Naive thymus-derived CD8-positive, alpha-beta T cell (primary cell): ENCODE measurements at regions of chr9 and their contacts with region 1.

Region 1: GRCh38 chr9:136267261-136268111 is 21.9 kb upstream of the QSOX2 start:
- DNase-seq: peak; percentile 75 to 90 (median 82)
- ATAC-seq: peak; percentile 93 to 97
- H3K4me3 Mint-ChIP-seq: peak overlapping the region; percentile 75 to 87 (median 80)
- H3K27ac Mint-ChIP-seq: peak overlapping the region; percentile 19 to 93 (median 77)
- H3K4me1 Mint-ChIP-seq: peaks cover 0 to 9% (median 3%) of the 10 kb centered on the region in 4 donors
- H3K27me3 Mint-ChIP-seq: no peaks in the 10 kb centered on the region

Region 2: DNA sequence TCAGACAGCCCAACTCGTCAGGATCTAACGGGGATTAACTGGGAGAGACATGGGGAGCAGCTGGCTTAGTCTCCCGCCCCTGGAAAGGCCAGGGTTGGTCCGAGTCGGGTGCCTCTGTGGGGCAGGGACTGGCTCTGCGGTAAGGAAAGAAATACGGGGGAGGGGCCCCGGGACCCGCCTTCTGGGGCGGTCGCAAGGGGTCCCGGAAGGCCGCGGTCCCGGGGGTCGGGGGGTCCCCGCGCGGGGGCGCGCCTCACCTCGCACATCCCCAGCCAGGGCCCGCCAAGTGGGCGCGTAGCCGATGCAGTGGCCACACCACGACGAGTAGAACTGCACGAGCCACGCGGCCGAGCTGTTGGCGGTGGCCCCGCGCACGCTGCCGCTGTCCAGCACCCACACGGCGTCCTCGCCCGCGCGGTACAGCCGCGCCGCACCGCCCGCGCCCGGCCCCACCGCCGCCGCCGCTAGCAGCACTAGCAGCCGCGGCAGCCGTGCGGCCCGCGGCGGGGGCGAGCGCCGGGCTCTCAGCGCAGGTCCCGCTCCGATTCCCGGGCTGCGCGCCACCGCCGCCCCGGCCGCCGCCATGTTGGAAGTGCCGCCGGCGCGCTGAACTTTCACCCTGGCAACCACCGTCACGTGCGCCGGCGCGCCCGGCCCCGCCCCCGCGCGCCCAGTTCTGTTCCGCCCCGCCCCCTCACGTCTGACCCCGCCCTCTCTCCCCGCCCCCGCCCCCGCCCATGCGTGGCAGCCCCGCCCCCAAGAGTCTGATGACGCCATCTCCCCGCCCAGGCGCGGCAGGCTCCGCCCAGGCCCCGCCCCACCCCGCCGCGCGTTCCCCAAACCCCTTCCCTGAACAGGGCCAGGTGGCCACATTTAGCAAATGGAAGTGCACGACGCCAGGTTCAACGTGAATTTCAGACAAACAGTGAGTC is 22.0 kb before region 1 on chr9 and contains the start of gene QSOX2:
- POLR2A ChIA-PET with region 1: interaction called, 11 read pairs
- DNase-seq: peak; percentile 74 to 90 (median 85)
- ATAC-seq: peak; percentile 75 to 76
- H3K4me3 Mint-ChIP-seq: peak within 1 kb of the TSS; percentile 90 to 99 (median 94)
- H3K27ac Mint-ChIP-seq: peak within 1 kb of the TSS; percentile 85 to 95 (median 90)
- H3K4me1 Mint-ChIP-seq: peaks cover 23 to 54% (median 47%) of the 10 kb centered on the region in 4 donors
- H3K27me3 Mint-ChIP-seq: no peaks in the 10 kb centered on the region
- polyA plus RNA-seq, gene QSOX2: 0.50 to 0.86 (median 0.55) TPM